Common myeloid progenitor, CD34-positive (primary cell): ENCODE measurements at regions of chr20 and their contacts with region 1.

Region 1: GRCh38 chr20:45095753-45096371 is 5.1 kb downstream of the KCNS1 start:
- DNase-seq: peak; percentile 63 to 79 (median 73)
- H3K4me3 ChIP-seq: no peak overlapping the region
- H3K27ac ChIP-seq: no peak overlapping the region
- H3K4me1 ChIP-seq: peaks cover 0 to 19% (median 10%) of the 10 kb centered on the region in 4 experiments
- H3K27me3 ChIP-seq: peaks cover 14 to 50% (median 40%) of the 10 kb centered on the region in 5 experiments

Region 2: DNA sequence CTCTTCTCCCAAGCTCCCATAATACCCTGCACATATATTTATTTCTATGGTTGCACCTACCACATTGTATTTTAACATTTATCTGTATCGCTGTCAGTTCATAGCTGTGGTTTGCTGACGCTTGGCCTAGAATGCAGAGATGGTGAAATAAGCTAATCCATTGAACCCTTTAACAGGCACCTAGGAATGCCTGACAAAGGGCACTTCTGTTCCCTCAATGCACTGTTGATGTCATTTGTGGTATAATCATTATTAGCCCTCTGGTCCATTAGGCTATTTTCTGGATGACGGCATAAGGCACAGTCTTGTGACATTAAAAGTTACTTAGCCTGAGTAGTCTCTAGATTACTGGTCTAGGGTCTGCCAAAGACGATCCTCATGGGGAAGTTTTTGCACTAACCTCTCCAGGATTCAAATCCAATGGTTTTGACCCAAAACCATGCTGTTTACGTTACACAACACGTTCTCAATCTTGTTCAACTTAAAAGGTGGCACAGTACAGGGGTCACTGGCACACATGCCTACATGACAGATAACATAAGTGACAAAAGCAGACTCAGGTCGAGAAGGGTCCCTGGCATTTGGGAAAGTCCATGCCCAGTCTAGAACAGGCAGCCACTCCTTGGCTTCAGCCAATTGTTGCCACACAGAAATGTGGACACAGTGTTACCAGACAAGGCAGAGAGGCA is 212.5 kb before region 1 on chr20:
- CTCF ChIA-PET with region 1: no interaction called
- POLR2A ChIA-PET with region 1: no interaction called
- DNase-seq: no peak
- H3K4me3 ChIP-seq: no peak overlapping the region
- H3K27ac ChIP-seq: no peak overlapping the region
- H3K4me1 ChIP-seq: peaks cover 7 to 32% (median 27%) of the 10 kb centered on the region in 4 experiments
- H3K27me3 ChIP-seq: no peaks in the 10 kb centered on the region

Region 3: DNA sequence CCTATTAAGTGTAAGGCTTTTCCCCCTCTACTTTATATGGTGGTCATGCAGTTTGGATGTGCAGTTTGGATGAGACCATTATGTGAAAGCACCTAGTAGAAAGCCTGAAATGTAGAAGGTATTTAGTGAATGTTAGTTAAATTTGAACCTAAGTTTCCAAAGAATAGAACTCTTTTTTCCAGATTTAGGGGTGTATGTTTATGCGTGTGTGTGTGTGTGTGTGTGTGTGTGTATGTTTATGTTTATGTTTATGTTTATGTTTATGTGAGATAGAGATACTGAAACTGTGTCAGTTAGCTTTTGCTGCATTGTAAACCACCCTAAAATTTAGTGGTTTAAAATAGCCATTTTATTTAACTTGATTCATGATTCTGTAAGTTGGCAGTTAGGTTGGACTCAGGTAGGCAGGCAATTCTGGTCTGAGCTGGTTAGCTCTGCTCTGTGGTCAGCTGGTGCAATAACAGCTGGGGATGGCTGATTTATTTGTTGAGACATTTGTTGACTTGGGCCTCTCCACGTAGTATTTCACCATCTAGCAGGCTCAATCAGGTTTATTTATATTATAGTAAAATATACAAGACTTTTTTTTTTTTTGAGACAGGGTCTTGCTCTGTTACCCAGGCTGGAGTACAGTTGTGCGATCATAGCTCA is 75.5 kb before region 1 on chr20:
- CTCF ChIA-PET with region 1: no interaction called
- POLR2A ChIA-PET with region 1: no interaction called
- DNase-seq: no peak
- H3K4me3 ChIP-seq: no peak overlapping the region
- H3K27ac ChIP-seq: no peak overlapping the region
- H3K4me1 ChIP-seq: no peaks in the 10 kb centered on the region
- H3K27me3 ChIP-seq: no peaks in the 10 kb centered on the region

Region 4: GRCh38 chr20:45044084-45044573 is 51.7 kb before region 1 on chr20:
- CTCF ChIA-PET with region 1: interaction called, 199 read pairs
- POLR2A ChIA-PET with region 1: no interaction called
- DNase-seq: peak; percentile 74 to 86 (median 85)
- H3K4me3 ChIP-seq: no peak overlapping the region
- H3K27ac ChIP-seq: no peak overlapping the region
- H3K4me1 ChIP-seq: peaks cover 0 to 15% (median 7%) of the 10 kb centered on the region in 4 experiments
- H3K27me3 ChIP-seq: no peaks in the 10 kb centered on the region

Region 5: DNA sequence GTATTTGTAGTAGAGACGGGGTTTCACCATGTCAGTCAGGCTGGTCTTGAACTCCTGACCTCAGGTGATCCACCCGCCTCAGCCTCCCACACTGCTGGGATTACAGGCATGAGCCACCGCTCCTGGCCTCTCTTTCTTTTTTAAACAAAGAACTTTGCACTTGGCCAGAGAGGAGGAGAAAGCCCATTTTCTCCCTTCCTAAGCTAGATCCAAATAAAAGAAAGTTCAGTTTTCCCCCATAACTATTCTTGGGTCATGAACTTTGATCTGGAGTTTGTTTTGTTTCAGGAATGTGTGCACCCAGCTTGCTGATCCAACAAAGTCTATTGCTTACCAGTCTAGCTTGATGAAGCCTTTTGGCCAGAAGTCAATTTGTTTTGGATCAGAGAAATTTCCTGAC is 18.3 kb before region 1 on chr20:
- CTCF ChIA-PET with region 1: interaction called, 32 read pairs
- POLR2A ChIA-PET with region 1: no interaction called
- DNase-seq: no peak
- H3K4me3 ChIP-seq: no peak overlapping the region
- H3K27ac ChIP-seq: no peak overlapping the region
- H3K4me1 ChIP-seq: no peaks in the 10 kb centered on the region
- H3K27me3 ChIP-seq: no peaks in the 10 kb centered on the region

Region 6: GRCh38 chr20:45111799-45112471 is 16.1 kb after region 1 on chr20:
- CTCF ChIA-PET with region 1: interaction called, 49 read pairs
- POLR2A ChIA-PET with region 1: no interaction called
- DNase-seq: peak in 1 of 3 donors; percentile 29
- H3K4me3 ChIP-seq: no peak overlapping the region
- H3K27ac ChIP-seq: no peak overlapping the region
- H3K4me1 ChIP-seq: no peaks in the 10 kb centered on the region
- H3K27me3 ChIP-seq: peaks cover 0 to 34% (median 18%) of the 10 kb centered on the region in 5 experiments